ENCODE measurements at regions of chr11 and their contacts with region 1.

Region 1: GRCh38 chr11:62726915-62727763 is at the start of gene HNRNPUL2:
- DNase-seq: peak; percentile 99
- H3K4me3 ChIP-seq: peak within 1 kb of the TSS; percentile 71 to 99 (median 94)
- H3K27ac ChIP-seq: peak within 1 kb of the TSS; percentile 67
- H3K4me1 ChIP-seq: peaks cover 15% of the 10 kb centered on the region
- H3K27me3 ChIP-seq: no peaks in the 10 kb centered on the region
- CTCF ChIP-seq: no peak
- POLR2A ChIP-seq: peak; percentile 92
- total RNA-seq, gene HNRNPUL2: 53.4 and 56.2 TPM in 2 replicates

Region 2: DNA sequence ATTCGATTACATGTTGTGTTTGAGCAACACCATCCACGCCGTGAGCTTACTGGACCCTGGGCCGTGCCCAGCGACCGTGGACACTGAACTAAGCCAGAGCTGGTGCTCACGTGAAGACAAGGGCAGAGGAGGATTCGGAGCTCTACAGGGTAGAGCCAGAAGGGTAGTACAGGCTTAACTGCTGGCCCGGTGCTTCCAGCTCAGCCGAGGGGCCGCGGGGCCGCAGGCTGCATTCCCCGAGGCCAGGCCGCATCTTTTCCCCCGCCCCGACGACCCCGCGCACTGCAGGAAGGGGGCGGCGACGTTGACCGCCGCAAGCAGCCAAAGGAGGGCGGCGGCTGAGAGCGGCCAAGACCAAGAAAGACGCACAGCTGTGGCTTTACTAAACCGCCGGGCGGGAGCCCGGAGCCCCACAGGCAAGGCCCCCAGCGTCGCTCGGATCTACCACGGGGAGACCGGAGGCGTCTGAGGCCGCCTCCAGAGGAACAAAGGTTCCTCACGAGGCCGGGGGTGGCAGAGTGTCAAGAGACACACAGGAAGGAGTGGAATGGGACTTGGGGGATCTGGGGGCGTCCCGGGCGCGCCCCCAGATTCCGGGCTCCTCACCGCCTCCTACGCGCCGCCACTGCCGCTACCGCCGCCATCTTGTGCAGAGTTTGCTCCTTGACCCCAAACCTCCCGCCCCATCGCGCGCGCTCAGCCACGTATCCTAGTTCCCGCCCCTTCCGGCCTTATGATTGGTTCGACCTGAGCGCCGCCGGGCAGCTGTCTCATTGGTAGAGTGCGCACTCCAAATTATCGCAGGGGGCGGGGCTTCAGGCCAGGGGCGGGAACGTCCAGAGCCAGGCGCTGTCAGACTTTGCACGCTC is 80.9 kb before region 1 on chr11 and contains the start of gene GANAB:
- CTCF ChIA-PET with region 1: no interaction called
- POLR2A ChIA-PET with region 1: interaction called, 3 read pairs
- dilution Hi-C with region 1: no loop called
- intact Hi-C with region 1: loop called (anchors 1 kb)
- DNase-seq: peak; percentile 97
- H3K4me3 ChIP-seq: peak within 1 kb of the TSS; percentile 62 to 87 (median 65)
- H3K27ac ChIP-seq: peak within 1 kb of the TSS; percentile 80
- H3K4me1 ChIP-seq: peaks cover 11% of the 10 kb centered on the region
- H3K27me3 ChIP-seq: no peaks in the 10 kb centered on the region
- CTCF ChIP-seq: no peak
- POLR2A ChIP-seq: peak; percentile 97
- total RNA-seq, gene GANAB: 357 and 389 TPM in 2 replicates

Region 3: GRCh38 chr11:62687508-62688396 is 39.4 kb before region 1 on chr11:
- CTCF ChIA-PET with region 1: no interaction called
- POLR2A ChIA-PET with region 1: no interaction called
- dilution Hi-C with region 1: no loop called
- intact Hi-C with region 1: no loop called
- DNase-seq: no peak
- H3K4me3 ChIP-seq: peak overlapping the region in 1 of 3 experiments; percentile 16
- H3K27ac ChIP-seq: no peak overlapping the region
- H3K4me1 ChIP-seq: no peaks in the 10 kb centered on the region
- H3K27me3 ChIP-seq: peaks cover 2 to 10% of the 10 kb centered on the region in 2 experiments
- CTCF ChIP-seq: no peak
- POLR2A ChIP-seq: no peak

Region 4: GRCh38 chr11:62705880-62706849 is 21.0 kb before region 1 on chr11:
- CTCF ChIA-PET with region 1: interaction called, 5 read pairs
- POLR2A ChIA-PET with region 1: interaction called, 7 read pairs
- dilution Hi-C with region 1: no loop called
- intact Hi-C with region 1: loop called (anchors 1 kb)
- DNase-seq: peak; percentile 95
- H3K4me3 ChIP-seq: peak overlapping the region; percentile 13 to 81 (median 41)
- H3K27ac ChIP-seq: peak overlapping the region; percentile 37
- H3K4me1 ChIP-seq: peaks cover 25% of the 10 kb centered on the region
- H3K27me3 ChIP-seq: no peaks in the 10 kb centered on the region
- CTCF ChIP-seq: no peak
- POLR2A ChIP-seq: peak; percentile 49

Region 5: DNA sequence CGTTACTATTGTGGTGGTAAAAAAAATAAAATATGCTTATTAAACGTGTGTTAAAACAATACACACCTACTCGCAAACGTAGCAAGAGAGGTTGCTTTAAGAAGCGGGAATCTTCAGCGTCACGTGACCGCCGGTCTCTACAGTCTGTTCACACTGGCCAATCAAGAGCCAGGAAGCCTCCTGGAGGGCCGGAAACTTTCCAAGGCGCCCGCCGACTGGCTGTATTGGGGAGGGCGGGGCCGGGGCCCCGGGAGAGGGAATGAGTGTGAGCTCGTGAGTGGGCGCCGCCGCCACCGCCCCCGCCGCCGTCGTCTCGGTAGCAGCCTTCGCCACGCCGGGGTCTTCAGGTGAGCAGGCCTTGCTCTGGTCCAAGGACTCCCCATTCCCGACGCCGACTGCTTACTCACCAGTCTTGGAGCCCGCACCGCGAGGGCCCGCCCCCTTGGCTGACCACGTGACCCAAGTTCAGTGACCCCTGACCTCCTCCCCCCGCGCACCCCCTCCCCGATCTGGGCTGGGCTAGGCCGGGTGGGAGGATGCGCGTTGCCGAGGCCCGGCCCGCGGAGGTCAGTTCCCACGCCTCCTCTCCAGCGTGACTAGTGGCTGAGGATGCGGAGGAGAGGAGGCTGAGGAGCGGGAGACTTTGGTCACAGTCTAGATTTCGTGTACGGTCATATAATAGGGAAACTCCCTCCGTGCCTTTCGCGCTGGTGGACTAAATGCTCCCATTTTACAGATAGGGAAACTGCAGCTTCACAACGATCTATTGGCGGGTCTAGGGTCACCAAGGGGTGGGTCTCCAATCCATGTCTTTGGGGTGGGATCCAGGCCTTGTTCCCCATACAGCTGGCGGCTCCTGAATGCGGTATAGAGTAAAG is 44.2 kb after region 1 on chr11 and contains the start of gene TAF6L:
- CTCF ChIA-PET with region 1: interaction called, 6 read pairs
- POLR2A ChIA-PET with region 1: no interaction called
- dilution Hi-C with region 1: no loop called
- intact Hi-C with region 1: loop called (anchors 1 kb)
- DNase-seq: peak; percentile 96
- H3K4me3 ChIP-seq: peak within 1 kb of the TSS; percentile 4 to 53 (median 48)
- H3K27ac ChIP-seq: peak within 1 kb of the TSS; percentile 39
- H3K4me1 ChIP-seq: peaks cover 11% of the 10 kb centered on the region
- H3K27me3 ChIP-seq: no peaks in the 10 kb centered on the region
- CTCF ChIP-seq: no peak
- POLR2A ChIP-seq: peak; percentile 74
- total RNA-seq, gene TAF6L: 28.9 and 30.4 TPM in 2 replicates

Region 6: DNA sequence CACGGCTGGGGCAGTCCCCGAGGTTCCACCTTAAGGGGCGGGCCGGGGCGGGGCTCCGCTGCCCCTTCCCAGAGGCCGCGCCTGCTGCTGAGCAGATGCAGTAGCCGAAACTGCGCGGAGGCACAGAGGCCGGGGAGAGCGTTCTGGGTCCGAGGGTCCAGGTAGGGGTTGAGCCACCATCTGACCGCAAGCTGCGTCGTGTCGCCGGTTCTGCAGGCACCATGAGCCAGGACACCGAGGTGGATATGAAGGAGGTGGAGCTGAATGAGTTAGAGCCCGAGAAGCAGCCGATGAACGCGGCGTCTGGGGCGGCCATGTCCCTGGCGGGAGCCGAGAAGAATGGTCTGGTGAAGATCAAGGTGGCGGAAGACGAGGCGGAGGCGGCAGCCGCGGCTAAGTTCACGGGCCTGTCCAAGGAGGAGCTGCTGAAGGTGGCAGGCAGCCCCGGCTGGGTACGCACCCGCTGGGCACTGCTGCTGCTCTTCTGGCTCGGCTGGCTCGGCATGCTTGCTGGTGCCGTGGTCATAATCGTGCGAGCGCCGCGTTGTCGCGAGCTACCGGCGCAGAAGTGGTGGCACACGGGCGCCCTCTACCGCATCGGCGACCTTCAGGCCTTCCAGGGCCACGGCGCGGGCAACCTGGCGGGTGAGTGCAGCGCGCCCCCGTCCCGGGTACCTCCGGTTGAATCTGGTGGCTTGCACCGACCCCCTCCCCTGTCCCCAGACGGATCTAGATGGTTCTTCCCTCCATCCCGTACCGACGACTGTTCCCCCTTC is 153.9 kb after region 1 on chr11 and contains the start of gene SLC3A2:
- CTCF ChIA-PET with region 1: interaction called, 3 read pairs
- POLR2A ChIA-PET with region 1: interaction called, 5 read pairs
- dilution Hi-C with region 1: no loop called
- intact Hi-C with region 1: loop called (anchors 5 kb)
- DNase-seq: peak; percentile 91
- H3K4me3 ChIP-seq: peak within 1 kb of the TSS; percentile 75 to 100 (median 95)
- H3K27ac ChIP-seq: peak within 1 kb of the TSS; percentile 100
- H3K4me1 ChIP-seq: peaks cover 45% of the 10 kb centered on the region
- H3K27me3 ChIP-seq: no peaks in the 10 kb centered on the region
- CTCF ChIP-seq: peak; percentile 63 to 89
- POLR2A ChIP-seq: peak; percentile 99
- total RNA-seq, gene SLC3A2: 190 and 208 TPM in 2 replicates